ENCODE measurements at regions of chr13 and their contacts with region 1.

Region 1: GRCh38 chr13:32581177-32581786 is 5.0 kb upstream of the PDS5B start:
- DNase-seq: no peak
- H3K4me3 Mint-ChIP-seq: no peak overlapping the region
- H3K27ac Mint-ChIP-seq: no peak overlapping the region
- H3K4me1 Mint-ChIP-seq: peaks cover 11% of the 10 kb centered on the region
- H3K27me3 Mint-ChIP-seq: peaks cover 3% of the 10 kb centered on the region

Region 2: GRCh38 chr13:32381539-32381938 is 199.7 kb before region 1 on chr13:
- CTCF ChIA-PET with region 1: interaction called, 20 read pairs
- POLR2A ChIA-PET with region 1: no interaction called
- DNase-seq: peak; percentile 30
- H3K4me3 Mint-ChIP-seq: no peak overlapping the region
- H3K27ac Mint-ChIP-seq: no peak overlapping the region
- H3K4me1 Mint-ChIP-seq: no peaks in the 10 kb centered on the region
- H3K27me3 Mint-ChIP-seq: no peaks in the 10 kb centered on the region

Region 3: GRCh38 chr13:32472194-32472621 is 109.1 kb before region 1 on chr13:
- CTCF ChIA-PET with region 1: interaction called, 14 read pairs
- POLR2A ChIA-PET with region 1: interaction called, 3 read pairs
- DNase-seq: no peak
- H3K4me3 Mint-ChIP-seq: no peak overlapping the region
- H3K27ac Mint-ChIP-seq: peak overlapping the region; percentile 85
- H3K4me1 Mint-ChIP-seq: peaks cover 19% of the 10 kb centered on the region
- H3K27me3 Mint-ChIP-seq: no peaks in the 10 kb centered on the region

Region 4: GRCh38 chr13:32496599-32497160 is 84.6 kb before region 1 on chr13:
- CTCF ChIA-PET with region 1: no interaction called
- POLR2A ChIA-PET with region 1: no interaction called
- DNase-seq: no peak
- H3K4me3 Mint-ChIP-seq: no peak overlapping the region
- H3K27ac Mint-ChIP-seq: no peak overlapping the region
- H3K4me1 Mint-ChIP-seq: peaks cover 9% of the 10 kb centered on the region
- H3K27me3 Mint-ChIP-seq: no peaks in the 10 kb centered on the region

Region 5: DNA sequence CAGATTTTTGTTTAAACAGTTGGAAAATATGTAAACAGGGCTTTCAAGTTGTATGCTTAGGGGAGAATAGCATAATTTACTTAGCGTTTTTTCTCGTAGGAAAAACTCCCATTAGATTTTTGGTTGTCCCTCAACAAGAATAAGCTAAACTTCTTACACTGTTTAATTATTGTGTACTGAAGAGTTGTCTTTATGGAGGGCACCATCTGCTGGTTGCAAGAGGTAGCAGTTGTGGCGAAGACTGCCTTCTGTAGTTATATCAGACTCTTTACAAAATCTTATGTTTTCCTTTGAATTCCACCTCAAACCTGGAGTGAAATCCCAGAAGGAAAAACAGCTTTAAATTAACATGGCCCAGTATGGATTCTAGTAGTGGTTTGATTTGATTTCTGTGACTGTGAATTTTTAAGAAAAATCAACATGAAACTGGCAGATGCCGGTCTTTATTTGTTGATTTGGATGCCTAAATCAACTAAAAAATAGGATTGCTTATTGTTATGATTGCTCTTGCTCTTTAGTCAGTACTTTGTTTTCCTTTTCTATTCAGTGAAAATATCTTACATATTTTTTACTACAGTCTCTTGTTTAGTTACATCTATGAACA is 58.3 kb after region 1 on chr13:
- CTCF ChIA-PET with region 1: interaction called, 28 read pairs
- POLR2A ChIA-PET with region 1: interaction called, 4 read pairs
- DNase-seq: peak; percentile 56
- H3K4me3 Mint-ChIP-seq: no peak overlapping the region
- H3K27ac Mint-ChIP-seq: no peak overlapping the region
- H3K4me1 Mint-ChIP-seq: peaks cover 37% of the 10 kb centered on the region
- H3K27me3 Mint-ChIP-seq: no peaks in the 10 kb centered on the region

Region 6: GRCh38 chr13:32650705-32651311 is 69.5 kb after region 1 on chr13:
- CTCF ChIA-PET with region 1: interaction called, 29 read pairs
- POLR2A ChIA-PET with region 1: interaction called, 6 read pairs
- DNase-seq: peak; percentile 64
- H3K4me3 Mint-ChIP-seq: no peak overlapping the region
- H3K27ac Mint-ChIP-seq: no peak overlapping the region
- H3K4me1 Mint-ChIP-seq: peaks cover 30% of the 10 kb centered on the region
- H3K27me3 Mint-ChIP-seq: no peaks in the 10 kb centered on the region

Measured in activated CD4-positive, alpha-beta memory T cell treated with anti-CD3 and anti-CD28 coated beads, Interleukin-2, amount 10 ng/mL, durations not matched to agents 7 days and 5 days (primary cell).